Psoas muscle (tissue), 8 donors: ENCODE measurements at regions of chr2 and their contacts with region 1.

Region 1: DNA sequence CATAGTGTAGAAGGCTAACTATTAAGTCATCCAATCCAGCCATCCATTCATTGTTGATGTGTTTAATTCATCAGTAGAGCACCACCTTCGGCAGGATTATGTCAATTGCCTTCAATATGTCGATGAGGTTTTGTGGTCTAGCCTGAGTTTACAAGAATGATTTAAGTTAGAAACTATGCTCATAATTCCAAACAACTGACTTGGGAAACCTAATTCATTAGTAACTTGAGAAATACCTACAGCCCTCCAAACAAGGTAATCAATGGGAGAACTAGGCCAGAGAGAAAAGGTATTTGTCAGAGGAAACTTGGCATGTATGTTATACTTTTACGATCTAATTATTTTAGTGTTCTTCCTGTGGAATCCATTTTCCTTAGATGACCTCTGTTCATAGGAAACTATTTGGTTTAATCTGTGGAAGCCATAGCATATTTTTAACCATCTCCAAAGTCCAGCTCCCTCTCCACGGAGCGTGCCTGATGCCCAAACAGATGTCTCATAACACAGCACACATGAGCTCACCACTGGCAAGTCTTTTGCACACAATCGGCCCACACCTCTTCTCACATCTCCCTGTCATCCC is 148.5 kb downstream of the GFPT1 start:
- DNase-seq: no peak
- ATAC-seq: no peak
- H3K4me3 ChIP-seq: no peak overlapping the region
- H3K27ac ChIP-seq: no peak overlapping the region
- H3K4me1 ChIP-seq: no peaks in the 10 kb centered on the region
- H3K27me3 ChIP-seq: no peaks in the 10 kb centered on the region
- CTCF ChIP-seq: no peak

Region 2: DNA sequence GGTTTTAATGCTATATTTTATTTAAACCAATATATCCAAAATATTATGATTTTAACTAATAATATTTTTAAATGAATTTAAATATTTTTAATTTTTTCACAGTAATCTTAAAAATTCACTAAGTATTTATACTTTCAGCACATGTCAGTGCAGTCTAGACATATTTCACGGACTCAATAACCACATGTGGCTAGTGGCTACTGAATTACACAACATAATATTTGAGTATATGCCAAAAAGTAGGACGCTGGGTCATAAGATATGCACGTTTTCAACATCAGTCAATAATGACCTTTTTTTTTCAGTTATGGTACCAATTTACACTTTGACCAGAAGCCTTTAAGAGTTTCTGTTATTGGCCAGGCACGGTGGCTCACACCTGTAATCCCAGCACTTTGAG is 30.8 kb after region 1 on chr2:
- intact Hi-C with region 1: loop called in 1 of 2 experiments (anchors 1 kb)
- DNase-seq: no peak
- ATAC-seq: no peak
- H3K4me3 ChIP-seq: no peak overlapping the region
- H3K27ac ChIP-seq: no peak overlapping the region
- H3K4me1 ChIP-seq: no peaks in the 10 kb centered on the region
- H3K27me3 ChIP-seq: no peaks in the 10 kb centered on the region
- CTCF ChIP-seq: no peak